Activated CD4-positive, alpha-beta memory T cell treated with anti-CD3 and anti-CD28 coated beads for 36 hours (primary cell): ENCODE measurements at regions of chr7 and their contacts with region 1.

Region 1: DNA sequence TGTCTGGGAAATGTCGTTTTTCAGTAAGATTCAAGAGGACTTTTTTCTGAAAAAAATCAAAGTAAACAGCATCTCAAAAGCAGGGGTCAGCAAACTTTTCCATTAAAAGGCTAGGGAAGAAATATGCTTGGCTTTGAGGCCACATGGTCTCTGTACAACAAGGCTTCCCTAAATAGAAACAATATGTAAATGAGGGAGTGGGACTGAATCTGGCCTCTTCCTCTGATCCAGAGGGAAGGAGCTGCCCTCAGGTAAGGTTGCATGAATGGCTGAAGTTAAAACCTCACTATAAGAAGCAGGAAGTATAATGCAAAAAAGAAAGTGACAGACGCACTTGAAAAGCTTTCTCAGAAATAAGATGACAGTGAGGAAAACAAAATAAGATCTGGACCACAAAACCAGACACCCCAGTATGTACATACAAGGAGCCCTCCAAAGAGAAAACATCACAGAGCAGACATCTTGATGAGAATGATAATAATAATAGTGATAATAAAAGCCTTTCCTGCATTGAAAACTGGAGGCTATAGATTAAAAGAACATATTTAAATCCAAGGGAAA is 115.2 kb downstream of the PLXNA4 start:
- DNase-seq: no peak
- H3K4me3 Mint-ChIP-seq: no peak overlapping the region
- H3K27ac Mint-ChIP-seq: peak overlapping the region; percentile 64
- H3K4me1 Mint-ChIP-seq: peaks cover 21% of the 10 kb centered on the region
- H3K27me3 Mint-ChIP-seq: no peaks in the 10 kb centered on the region

Region 2: GRCh38 chr7:132430861-132431822 is 30.0 kb before region 1 on chr7:
- CTCF ChIA-PET with region 1: no interaction called
- POLR2A ChIA-PET with region 1: no interaction called
- intact Hi-C with region 1: loop called (anchors 2 kb)
- DNase-seq: peak; percentile 73
- H3K4me3 Mint-ChIP-seq: no peak overlapping the region
- H3K27ac Mint-ChIP-seq: peak overlapping the region; percentile 74
- H3K4me1 Mint-ChIP-seq: peaks cover 61% of the 10 kb centered on the region
- H3K27me3 Mint-ChIP-seq: peaks cover 3% of the 10 kb centered on the region